A673 (cell line): ENCODE measurements at regions of chr9 and their contacts with region 1.

Region 1: GRCh38 chr9:84079994-84080393 is 99.4 kb downstream of the RMI1 start:
- DNase-seq: no peak
- H3K4me3 ChIP-seq: no peak overlapping the region
- H3K27ac ChIP-seq: no peak overlapping the region
- H3K4me1 ChIP-seq: no peaks in the 10 kb centered on the region
- H3K27me3 ChIP-seq: no peaks in the 10 kb centered on the region
- CTCF ChIP-seq: no peak

Region 2: GRCh38 chr9:83166369-83166768 is 913.6 kb before region 1 on chr9:
- CTCF ChIA-PET with region 1: no interaction called
- POLR2A ChIA-PET with region 1: interaction called, 14 read pairs
- intact Hi-C with region 1: no loop called
- DNase-seq: no peak
- H3K4me3 ChIP-seq: no peak overlapping the region
- H3K27ac ChIP-seq: no peak overlapping the region
- H3K4me1 ChIP-seq: no peaks in the 10 kb centered on the region
- H3K27me3 ChIP-seq: no peaks in the 10 kb centered on the region
- CTCF ChIP-seq: no peak